OCI-LY7 (cell line): ENCODE measurements at regions of chr14 and their contacts with region 1.

Region 1: GRCh38 chr14:70821584-70822529 is 12.5 kb upstream of the MAP3K9 start:
- DNase-seq: no peak
- H3K4me3 ChIP-seq: peak overlapping the region; percentile 56
- H3K27ac ChIP-seq: no peak overlapping the region
- H3K4me1 ChIP-seq: no peaks in the 10 kb centered on the region
- CTCF ChIP-seq: no peak

Region 2: GRCh38 chr14:70972107-70972976 is 150.5 kb after region 1 on chr14:
- CTCF ChIA-PET with region 1: no interaction called
- POLR2A ChIA-PET with region 1: no interaction called
- intact Hi-C with region 1: loop called (anchors 1 kb)
- DNase-seq: peak; percentile 79
- H3K4me3 ChIP-seq: no peak overlapping the region
- H3K27ac ChIP-seq: no peak overlapping the region
- H3K4me1 ChIP-seq: no peaks in the 10 kb centered on the region
- CTCF ChIP-seq: peak; percentile 97